ENCODE measurements at regions of chr2 and their contacts with region 1.

Region 1: GRCh38 chr2:112941753-112942658 is 31.0 kb downstream of the IL37 start:
- DNase-seq: peak; percentile 86
- H3K4me3 ChIP-seq: no peak overlapping the region
- H3K27ac ChIP-seq: no peak overlapping the region
- H3K4me1 ChIP-seq: no peaks in the 10 kb centered on the region
- H3K27me3 ChIP-seq: peaks cover 28% of the 10 kb centered on the region

Region 2: GRCh38 chr2:112021781-112022231 is 920.2 kb before region 1 on chr2:
- in situ Hi-C with region 1: no loop called
- DNase-seq: peak; percentile 44
- H3K4me3 ChIP-seq: no peak overlapping the region
- H3K27ac ChIP-seq: no peak overlapping the region
- H3K4me1 ChIP-seq: no peaks in the 10 kb centered on the region
- H3K27me3 ChIP-seq: peaks cover 33% of the 10 kb centered on the region

Region 3: DNA sequence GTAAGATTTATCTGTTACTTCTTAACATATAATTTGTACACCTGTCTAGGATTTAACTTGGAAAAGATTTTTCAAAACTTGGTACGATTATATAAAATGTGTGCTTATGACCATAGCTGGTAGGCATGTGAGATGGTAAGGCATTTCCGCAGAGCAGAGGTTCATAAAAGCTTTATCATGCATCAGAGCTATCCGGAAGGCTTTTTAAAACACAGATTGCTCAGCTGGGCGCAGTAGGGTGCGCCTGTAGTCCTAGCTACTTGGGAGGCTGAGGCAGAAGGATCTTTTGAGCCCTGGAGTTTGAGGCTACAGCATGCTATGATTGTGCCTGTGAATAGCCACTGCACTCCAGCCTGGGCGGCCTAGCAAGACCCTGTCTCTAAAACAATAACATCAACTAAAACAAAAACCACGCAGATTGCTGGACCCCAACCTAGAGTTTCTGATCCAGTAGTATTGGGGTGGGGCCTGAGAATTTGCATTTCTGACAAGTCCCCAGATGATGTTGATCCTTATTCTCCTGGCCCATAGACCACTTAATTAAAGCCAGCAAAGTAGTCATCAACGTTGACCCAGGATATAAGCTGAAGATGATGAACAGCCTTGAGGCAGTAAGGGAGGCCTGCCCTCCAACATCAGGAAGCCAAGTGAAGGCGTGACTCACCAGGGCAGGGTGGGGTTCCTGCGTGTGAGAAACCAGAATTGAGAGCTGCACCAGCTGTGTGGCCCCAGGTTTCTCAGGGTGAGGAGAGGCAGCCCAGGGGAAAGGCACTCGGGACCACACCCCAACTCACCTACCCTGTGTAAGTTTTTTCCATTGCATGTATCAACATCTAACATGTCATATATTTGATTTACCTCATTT is 317.9 kb before region 1 on chr2:
- in situ Hi-C with region 1: loop called (anchors 25 kb)
- DNase-seq: peak; percentile 95
- H3K4me3 ChIP-seq: peak overlapping the region; percentile 54
- H3K27ac ChIP-seq: peak overlapping the region; percentile 90
- H3K4me1 ChIP-seq: peaks cover 73% of the 10 kb centered on the region
- H3K27me3 ChIP-seq: no peaks in the 10 kb centered on the region

Region 4: DNA sequence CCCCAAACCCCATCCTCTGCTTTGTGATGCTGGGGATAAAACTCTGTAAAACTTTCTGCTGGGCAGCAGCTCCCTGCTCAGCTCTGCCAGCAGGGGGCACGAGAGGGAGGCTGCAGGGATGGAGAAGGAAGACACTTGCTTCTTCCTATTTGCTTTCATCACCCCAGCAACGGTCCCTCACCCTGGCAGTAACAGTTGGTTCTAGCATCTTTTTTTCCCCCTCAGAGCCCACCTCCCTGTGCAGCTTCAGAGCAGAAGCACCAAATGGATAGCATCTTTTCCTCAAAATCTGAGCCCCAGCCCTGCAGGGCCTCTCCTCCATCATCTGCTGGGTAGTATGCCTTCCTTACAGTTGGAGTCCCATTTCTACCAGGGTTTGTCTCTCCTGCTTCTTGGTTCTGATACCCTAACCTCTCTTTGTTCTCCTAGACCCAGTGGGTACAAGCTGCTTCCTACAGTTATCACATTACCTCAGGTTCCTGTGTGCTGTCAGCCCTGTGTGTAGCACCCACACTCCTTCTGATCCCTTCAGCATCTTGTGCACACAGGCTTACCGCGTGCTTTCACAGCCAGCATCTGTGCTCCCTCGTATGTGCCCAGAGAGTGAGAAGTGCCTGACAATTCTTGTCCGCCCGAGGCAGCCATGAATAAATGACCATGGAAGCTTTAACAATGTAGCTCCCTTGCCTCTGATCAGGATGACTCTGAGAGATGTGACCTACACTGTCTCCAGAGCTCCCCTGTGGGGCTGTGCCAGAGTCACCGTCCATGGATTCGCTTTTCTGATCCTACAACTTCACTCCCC is 192.0 kb before region 1 on chr2:
- in situ Hi-C with region 1: loop called (anchors 5 kb)
- DNase-seq: peak; percentile 81
- H3K4me3 ChIP-seq: no peak overlapping the region
- H3K27ac ChIP-seq: peak overlapping the region; percentile 16
- H3K4me1 ChIP-seq: no peaks in the 10 kb centered on the region
- H3K27me3 ChIP-seq: no peaks in the 10 kb centered on the region

Measured in GM23248 (cell line).